ENCODE measurements at regions of chr1 and their contacts with region 1.

Region 1: GRCh38 chr1:27525296-27526272 is 35.6 kb upstream of the WASF2 start:
- DNase-seq: peak; percentile 64 to 69
- H3K4me3 ChIP-seq: peak overlapping the region; percentile 33
- H3K4me3 Mint-ChIP-seq: peak overlapping the region; percentile 85
- H3K27ac Mint-ChIP-seq: peak overlapping the region; percentile 80
- H3K4me1 ChIP-seq: peaks cover 71% of the 10 kb centered on the region
- H3K4me1 Mint-ChIP-seq: peaks cover 66% of the 10 kb centered on the region
- H3K27me3 ChIP-seq: no peaks in the 10 kb centered on the region
- H3K27me3 Mint-ChIP-seq: no peaks in the 10 kb centered on the region
- CTCF ChIP-seq: no peak

Region 2: GRCh38 chr1:27489910-27490741 is 35.5 kb before region 1 on chr1 and contains the start of gene WASF2:
- CTCF ChIA-PET with region 1: no interaction called
- POLR2A ChIA-PET with region 1: interaction called, 4 read pairs
- intact Hi-C with region 1: loop called (anchors 5 kb)
- DNase-seq: peak; percentile 95 to 96
- H3K4me3 ChIP-seq: peak within 1 kb of the TSS; percentile 91
- H3K4me3 Mint-ChIP-seq: peak within 1 kb of the TSS; percentile 93
- H3K27ac Mint-ChIP-seq: peak within 1 kb of the TSS; percentile 100
- H3K4me1 ChIP-seq: peaks cover 11% of the 10 kb centered on the region
- H3K4me1 Mint-ChIP-seq: peaks cover 6% of the 10 kb centered on the region
- H3K27me3 ChIP-seq: no peaks in the 10 kb centered on the region
- H3K27me3 Mint-ChIP-seq: no peaks in the 10 kb centered on the region
- CTCF ChIP-seq: no peak
- total RNA-seq, gene WASF2: 59.2 and 68.6 TPM in 2 replicates

Region 3: GRCh38 chr1:27504588-27505419 is 20.8 kb before region 1 on chr1:
- CTCF ChIA-PET with region 1: no interaction called
- POLR2A ChIA-PET with region 1: no interaction called
- intact Hi-C with region 1: loop called (anchors 2 kb)
- DNase-seq: peak; percentile 47 to 65
- H3K4me3 ChIP-seq: no peak overlapping the region
- H3K4me3 Mint-ChIP-seq: no peak overlapping the region
- H3K27ac Mint-ChIP-seq: peak overlapping the region; percentile 56
- H3K4me1 ChIP-seq: peaks cover 18% of the 10 kb centered on the region
- H3K4me1 Mint-ChIP-seq: peaks cover 18% of the 10 kb centered on the region
- H3K27me3 ChIP-seq: no peaks in the 10 kb centered on the region
- H3K27me3 Mint-ChIP-seq: no peaks in the 10 kb centered on the region
- CTCF ChIP-seq: no peak

Region 4: DNA sequence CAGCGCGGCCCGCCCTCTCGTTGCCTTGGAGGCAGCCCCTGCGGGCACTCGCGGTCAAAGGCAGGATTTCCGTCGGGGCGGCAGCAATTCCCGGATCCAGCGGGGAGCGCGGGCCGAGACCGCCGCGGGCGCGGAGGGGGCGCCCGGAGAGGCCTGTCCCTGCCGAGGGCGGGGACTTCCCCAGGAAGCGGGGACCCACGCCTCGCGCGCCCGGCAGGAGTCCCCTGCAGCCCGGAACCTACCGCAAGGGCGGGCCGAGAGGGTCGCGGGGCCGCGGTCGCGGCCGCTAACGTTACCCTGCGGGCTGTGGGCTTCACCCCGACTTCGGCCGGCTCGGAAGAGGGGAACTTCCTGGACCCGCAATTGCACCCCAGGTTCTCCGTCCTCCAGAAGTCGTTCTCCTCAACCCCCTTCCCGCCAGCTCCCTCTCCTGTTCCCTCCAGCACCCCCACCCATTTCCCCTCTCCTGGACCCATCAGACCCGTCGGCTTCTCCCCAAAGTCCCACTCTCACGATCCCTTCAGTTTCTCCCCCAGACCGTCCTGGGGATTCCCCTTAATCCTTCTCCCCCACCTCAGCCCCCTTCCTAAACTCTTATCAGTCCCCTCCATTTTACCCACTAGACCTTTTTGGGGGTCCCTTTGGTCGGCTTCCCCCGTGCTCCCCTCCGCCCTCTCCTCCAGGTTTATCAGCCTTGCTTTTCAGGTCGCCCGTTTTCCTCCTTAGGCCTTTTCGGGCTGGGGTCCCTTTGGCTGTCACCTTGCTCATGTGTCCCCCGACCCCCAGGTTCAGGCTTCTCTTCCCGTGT is 108.8 kb after region 1 on chr1:
- CTCF ChIA-PET with region 1: no interaction called
- POLR2A ChIA-PET with region 1: no interaction called
- intact Hi-C with region 1: no loop called
- DNase-seq: no peak
- H3K4me3 ChIP-seq: no peak overlapping the region
- H3K4me3 Mint-ChIP-seq: no peak overlapping the region
- H3K27ac Mint-ChIP-seq: peak overlapping the region; percentile 55
- H3K4me1 ChIP-seq: no peaks in the 10 kb centered on the region
- H3K4me1 Mint-ChIP-seq: no peaks in the 10 kb centered on the region
- H3K27me3 ChIP-seq: no peaks in the 10 kb centered on the region
- H3K27me3 Mint-ChIP-seq: no peaks in the 10 kb centered on the region
- CTCF ChIP-seq: no peak